HCT116 (cell line): ENCODE measurements at regions of chr7 and their contacts with region 1.

Region 1: DNA sequence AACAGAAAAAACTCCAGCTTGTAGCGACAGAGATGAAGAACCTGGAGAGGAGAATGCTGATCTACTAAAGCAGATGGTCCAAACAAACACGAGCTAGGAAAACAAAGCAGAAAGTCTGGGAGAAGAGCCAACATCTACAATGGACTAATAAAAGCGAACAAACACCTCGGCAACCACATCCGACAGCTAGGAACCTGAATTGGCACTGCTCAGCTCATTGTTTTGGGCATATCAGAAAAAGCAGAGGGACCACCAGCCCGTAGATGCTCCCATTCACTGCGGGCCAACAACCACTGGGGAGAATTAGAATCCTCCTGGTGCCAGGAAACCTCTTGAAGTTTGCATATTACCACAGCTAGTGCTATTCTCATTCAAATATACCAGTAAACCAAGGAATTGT is 204.7 kb downstream of the NXPH1 start:
- DNase-seq: no peak
- ATAC-seq: no peak
- H3K4me3 ChIP-seq: no peak overlapping the region
- H3K27ac ChIP-seq: no peak overlapping the region
- H3K4me1 ChIP-seq: no peaks in the 10 kb centered on the region
- H3K27me3 ChIP-seq: no peaks in the 10 kb centered on the region
- CTCF ChIP-seq: no peak
- POLR2A ChIP-seq: no peak
- RAD21 ChIP-seq: no peak

Region 2: DNA sequence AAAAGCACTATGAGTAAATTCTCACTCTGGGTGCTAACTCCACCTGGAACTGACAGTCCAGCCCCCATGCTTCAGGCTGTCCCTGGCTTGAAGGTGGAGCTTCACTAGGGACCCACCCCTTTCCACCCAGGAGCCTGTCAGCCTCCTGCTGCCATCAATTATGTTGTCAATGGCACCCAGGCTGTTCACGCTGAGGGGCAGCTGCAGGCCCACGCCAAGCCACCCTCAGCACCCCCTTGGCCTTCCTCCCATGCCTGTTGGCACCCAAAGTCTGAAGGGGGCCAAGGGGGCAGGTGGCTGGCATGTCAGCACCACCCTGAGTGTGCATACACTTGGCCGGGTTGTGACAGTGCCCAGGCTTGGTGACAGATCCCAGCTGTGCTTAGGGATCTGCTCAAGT is 55.3 kb before region 1 on chr7:
- CTCF ChIA-PET with region 1: no interaction called
- POLR2A ChIA-PET with region 1: no interaction called
- RAD21 ChIA-PET with region 1: no interaction called
- intact Hi-C with region 1: loop called (anchors 10 kb)
- DNase-seq: no peak
- ATAC-seq: no peak
- H3K4me3 ChIP-seq: no peak overlapping the region
- H3K27ac ChIP-seq: no peak overlapping the region
- H3K4me1 ChIP-seq: no peaks in the 10 kb centered on the region; a peak in 1 of 4 replicates
- H3K27me3 ChIP-seq: 0 out of 2 replicates have a peak, but pooled peaks cover 3% of the 10 kb centered on the region
- CTCF ChIP-seq: no peak
- POLR2A ChIP-seq: no peak
- RAD21 ChIP-seq: no peak